ENCODE measurements at regions of chr5 and their contacts with region 1.

Region 1: GRCh38 chr5:157761690-157762621 is 18.4 kb downstream of the LSM11 start:
- DNase-seq: no peak
- H3K4me3 ChIP-seq: no peak overlapping the region
- H3K27me3 ChIP-seq: no peaks in the 10 kb centered on the region
- CTCF ChIP-seq: peak; percentile 82

Region 2: GRCh38 chr5:157630341-157630740 is 131.6 kb before region 1 on chr5:
- CTCF ChIA-PET with region 1: no interaction called
- POLR2A ChIA-PET with region 1: no interaction called
- DNase-seq: no peak
- H3K4me3 ChIP-seq: no peak overlapping the region
- H3K27me3 ChIP-seq: no peaks in the 10 kb centered on the region
- CTCF ChIP-seq: no peak

Region 3: DNA sequence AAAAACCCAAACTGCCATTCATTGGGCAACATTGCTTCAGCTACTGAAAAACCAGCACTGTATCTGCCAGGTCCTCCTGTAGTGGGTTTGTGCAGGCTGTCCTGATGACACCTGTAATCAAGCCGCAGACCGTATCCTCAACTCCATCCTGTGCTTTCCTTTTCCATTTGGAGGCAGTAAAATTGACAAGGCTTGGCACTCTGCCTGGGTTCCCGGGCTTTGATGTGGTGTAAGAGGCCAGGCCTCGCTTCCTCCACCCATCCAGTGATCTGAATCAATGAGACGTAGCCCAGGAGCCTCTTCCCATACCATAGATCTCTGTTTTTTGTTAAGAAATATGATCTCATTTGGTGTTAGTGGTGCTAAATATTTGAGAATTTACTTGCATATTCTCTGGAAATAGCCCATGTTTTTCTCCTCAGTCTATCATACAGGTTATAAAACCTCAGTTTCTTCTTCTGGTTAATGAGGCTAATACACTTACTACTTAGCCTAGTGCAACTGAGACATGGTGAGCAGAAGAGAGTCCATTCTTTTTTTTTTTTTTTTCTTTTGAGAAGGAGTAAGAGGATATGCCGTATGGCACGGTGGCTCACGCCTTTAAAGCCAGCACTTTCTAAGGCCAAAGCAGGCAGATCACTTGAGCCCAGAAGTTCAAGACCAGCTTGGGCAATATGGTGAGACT is 16.3 kb after region 1 on chr5:
- CTCF ChIA-PET with region 1: interaction called, 11 read pairs
- POLR2A ChIA-PET with region 1: no interaction called
- DNase-seq: peak; percentile 4
- H3K4me3 ChIP-seq: no peak overlapping the region
- H3K27me3 ChIP-seq: no peaks in the 10 kb centered on the region
- CTCF ChIP-seq: no peak

Region 4: DNA sequence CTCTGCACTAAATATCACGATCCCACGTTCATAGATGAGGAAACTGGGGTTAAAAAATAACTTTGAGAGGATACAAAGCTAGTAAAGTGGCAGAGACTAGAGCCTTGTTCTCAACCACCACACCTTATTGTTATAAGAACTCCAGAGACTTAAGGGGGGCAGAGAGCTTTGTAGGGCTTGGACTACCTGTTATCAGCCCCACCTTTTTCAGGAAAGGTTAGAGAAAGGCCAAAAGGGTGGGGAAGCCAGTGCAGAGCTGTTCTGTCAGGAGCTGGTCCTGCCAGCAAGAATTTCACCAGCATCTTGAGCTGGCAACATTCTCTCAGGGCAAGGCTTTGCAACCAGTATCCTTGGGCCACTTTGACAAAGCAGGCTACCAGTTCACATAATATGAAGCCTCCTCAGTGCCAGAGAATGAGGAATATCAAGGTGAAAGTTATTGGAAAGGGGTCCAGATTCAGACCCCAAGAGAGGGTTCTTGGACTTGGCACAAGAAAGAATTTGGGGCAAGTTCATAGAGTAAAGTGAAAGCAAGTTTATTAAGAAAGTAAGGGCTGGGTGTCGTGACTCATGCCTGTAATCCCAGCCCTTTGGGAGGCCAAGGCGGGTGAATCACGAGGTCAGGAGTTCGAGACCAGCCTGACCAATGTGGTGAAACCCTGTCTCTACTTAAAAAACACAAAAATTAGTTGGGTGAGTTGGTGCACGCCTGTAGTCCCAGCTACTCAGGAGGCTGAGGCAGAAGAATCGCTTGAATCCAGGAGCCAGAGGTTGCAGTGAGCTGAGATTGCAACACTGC is 163.2 kb after region 1 on chr5:
- CTCF ChIA-PET with region 1: no interaction called
- POLR2A ChIA-PET with region 1: no interaction called
- DNase-seq: no peak
- H3K4me3 ChIP-seq: no peak overlapping the region
- H3K27me3 ChIP-seq: no peaks in the 10 kb centered on the region
- CTCF ChIP-seq: no peak

Measured in BJ (cell line).